ENCODE measurements at regions of chr9 and their contacts with region 1.

Region 1: DNA sequence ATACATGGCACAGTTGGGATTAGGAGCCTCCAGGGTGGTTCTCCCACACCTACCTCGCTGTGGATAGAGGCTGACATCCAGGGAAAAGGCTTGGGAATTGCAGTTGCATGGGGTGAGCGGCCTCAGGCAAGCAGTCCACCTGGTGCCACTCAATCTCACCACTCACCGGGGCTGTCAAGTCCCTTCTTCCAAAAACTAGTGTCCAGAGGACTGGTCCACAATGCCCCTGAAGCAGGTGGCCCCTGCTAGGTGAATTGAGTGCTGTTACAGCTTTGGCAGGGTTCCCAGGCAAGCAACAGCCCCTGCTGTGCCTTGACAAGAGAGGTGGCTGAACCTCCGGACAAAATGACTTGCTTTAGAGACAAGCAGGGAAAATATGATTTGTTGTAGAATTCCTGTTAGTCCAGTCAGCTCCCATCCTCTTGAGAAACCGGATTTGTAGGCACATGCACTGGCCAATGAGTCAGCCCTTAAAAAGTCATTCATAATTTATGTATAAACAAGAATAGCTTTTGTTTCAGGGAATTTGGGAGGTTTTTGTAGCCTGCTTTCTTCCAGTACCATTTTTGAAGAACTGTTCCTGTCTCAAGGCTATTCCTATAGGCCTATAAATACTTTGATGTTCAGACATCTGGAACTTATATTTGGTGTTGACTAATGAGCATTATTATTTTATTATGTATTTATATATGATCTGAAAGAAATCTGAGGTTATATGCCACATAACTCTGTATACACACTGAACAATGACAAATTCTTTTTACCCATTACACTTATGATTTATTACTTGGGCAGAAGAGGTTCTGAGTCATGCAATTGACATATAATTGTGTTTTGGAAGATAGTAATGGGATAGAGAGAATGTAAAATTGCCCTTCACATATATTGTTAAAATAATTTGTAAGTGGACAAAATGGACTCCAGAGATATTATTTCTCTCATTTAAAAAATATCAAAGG is 411.1 kb downstream of the ACTL7B start:
- DNase-seq: peak; percentile 89
- H3K4me3 ChIP-seq: no peak overlapping the region
- H3K27ac ChIP-seq: peak overlapping the region; percentile 46
- H3K4me1 ChIP-seq: peaks cover 26% of the 10 kb centered on the region
- H3K27me3 ChIP-seq: no peaks in the 10 kb centered on the region
- CTCF ChIP-seq: no peak
- POLR2A ChIP-seq: no peak

Region 2: GRCh38 chr9:108434036-108434435 is 10.6 kb before region 1 on chr9:
- CTCF ChIA-PET with region 1: interaction called, 10 read pairs
- POLR2A ChIA-PET with region 1: interaction called, 3 read pairs
- dilution Hi-C with region 1: no loop called
- intact Hi-C with region 1: no loop called
- DNase-seq: no peak
- H3K4me3 ChIP-seq: no peak overlapping the region
- H3K27ac ChIP-seq: no peak overlapping the region
- H3K4me1 ChIP-seq: no peaks in the 10 kb centered on the region
- H3K27me3 ChIP-seq: no peaks in the 10 kb centered on the region
- CTCF ChIP-seq: no peak
- POLR2A ChIP-seq: no peak

Region 3: DNA sequence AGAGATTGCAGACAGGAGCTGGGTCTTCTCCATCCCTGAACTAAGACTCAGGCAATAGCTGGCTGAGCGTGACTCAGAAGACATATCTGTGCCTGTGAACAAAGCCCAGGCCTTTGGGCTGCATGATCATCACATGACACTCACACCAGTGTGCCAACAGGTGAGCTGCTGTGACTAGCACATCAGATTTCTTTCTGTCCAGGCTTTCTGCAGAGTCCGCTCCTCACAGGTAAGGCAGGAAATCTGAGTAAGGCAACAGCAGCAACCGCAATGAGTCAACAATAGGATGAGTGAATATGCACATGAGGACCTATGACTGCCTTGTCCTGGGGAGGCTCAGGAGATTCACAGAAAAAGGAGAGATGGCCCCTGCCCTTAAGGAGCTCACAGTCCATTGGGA is 117.5 kb after region 1 on chr9:
- CTCF ChIA-PET with region 1: no interaction called
- POLR2A ChIA-PET with region 1: no interaction called
- dilution Hi-C with region 1: no loop called
- intact Hi-C with region 1: no loop called
- DNase-seq: no peak
- H3K4me3 ChIP-seq: no peak overlapping the region
- H3K27ac ChIP-seq: no peak overlapping the region
- H3K4me1 ChIP-seq: no peaks in the 10 kb centered on the region
- H3K27me3 ChIP-seq: no peaks in the 10 kb centered on the region
- CTCF ChIP-seq: no peak
- POLR2A ChIP-seq: no peak